Heart left ventricle (tissue), 16 donors: ENCODE measurements at regions of chr5 and their contacts with region 1.

Region 1: GRCh38 chr5:78648359-78649210 is at the start of gene LHFPL2:
- DNase-seq: peak; percentile 78 to 88 (median 83)
- ATAC-seq: peak; percentile 44 to 91 (median 84)
- H3K4me3 ChIP-seq: peak within 1 kb of the TSS; percentile 50 to 97 (median 78)
- H3K27ac ChIP-seq: peak within 1 kb of the TSS; percentile 87 to 94 (median 91)
- H3K4me1 ChIP-seq: peaks cover 0 to 30% (median 14%) of the 10 kb centered on the region in 12 donors
- H3K27me3 ChIP-seq: peaks cover 0 to 4% (median 0%) of the 10 kb centered on the region in 9 donors
- CTCF ChIP-seq: no peak
- POLR2A ChIP-seq: peak in 1 of 2 donors; percentile 15
- total RNA-seq, gene LHFPL2: 5.6 to 35.6 (median 10.1) TPM

Region 2: GRCh38 chr5:78294248-78295034 is 354.1 kb before region 1 on chr5 and contains the start of gene AP3B1:
- intact Hi-C with region 1: loop called in 1 of 10 experiments (anchors 10 kb)
- DNase-seq: peak; percentile 99 to 100 (median 99)
- ATAC-seq: peak; percentile 96 to 98 (median 98)
- H3K4me3 ChIP-seq: peak within 1 kb of the TSS; percentile 60 to 97 (median 88)
- H3K27ac ChIP-seq: peak within 1 kb of the TSS; percentile 64 to 94 (median 90)
- H3K4me1 ChIP-seq: peaks cover 0 to 38% (median 22%) of the 10 kb centered on the region in 12 donors
- H3K27me3 ChIP-seq: no peaks in the 10 kb centered on the region
- CTCF ChIP-seq: no peak
- POLR2A ChIP-seq: peak; percentile 32 to 88
- total RNA-seq, gene AP3B1: 19.3 to 33.7 (median 25.2) TPM

Region 3: DNA sequence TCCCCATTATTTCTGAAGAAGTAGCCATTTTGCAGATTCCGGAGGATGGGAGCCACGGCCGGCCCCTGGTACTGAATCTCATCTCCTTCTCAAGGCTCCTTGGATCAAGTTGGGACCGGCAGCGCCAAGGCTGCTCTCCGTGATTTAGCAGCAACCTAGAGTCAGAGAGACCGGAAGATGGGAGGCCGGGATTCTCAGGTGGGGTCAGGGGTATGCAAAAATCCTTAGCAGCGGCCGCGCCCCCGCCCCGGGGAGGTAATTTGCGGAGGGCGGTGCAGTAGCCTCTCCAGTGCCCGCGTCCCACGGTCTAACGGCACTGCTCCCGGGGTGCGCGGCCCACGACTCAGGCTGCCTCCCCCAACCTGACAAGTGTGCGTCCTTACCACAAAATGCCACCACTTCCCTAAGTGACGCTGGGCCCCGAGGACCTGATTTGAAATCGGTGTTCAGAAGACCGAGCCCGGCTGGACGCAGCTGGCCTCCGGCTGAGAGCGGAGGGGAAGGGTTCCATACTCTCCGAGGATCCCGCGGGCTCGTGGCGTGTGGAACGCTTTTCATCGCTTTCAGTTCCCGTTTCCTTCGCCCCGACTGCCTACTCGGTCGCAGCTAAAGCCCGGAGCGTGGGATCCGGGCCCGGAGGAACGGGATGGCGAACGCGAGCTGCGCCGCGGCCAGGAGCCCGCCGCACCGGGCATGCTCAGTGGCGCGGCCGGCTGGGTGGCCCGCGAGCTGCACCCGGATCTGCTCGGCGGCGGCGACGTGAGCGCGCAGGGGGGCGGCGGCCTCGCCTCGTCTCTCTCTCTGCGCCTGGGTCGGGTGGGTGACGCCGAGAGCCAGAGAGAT is 288.5 kb before region 1 on chr5 and contains the start of gene SCAMP1:
- intact Hi-C with region 1: loop called in 2 of 10 experiments (anchors 10 kb)
- DNase-seq: peak; percentile 92 to 96 (median 93)
- ATAC-seq: peak; percentile 92 to 98 (median 98)
- H3K4me3 ChIP-seq: peak within 1 kb of the TSS; percentile 76 to 97 (median 89)
- H3K27ac ChIP-seq: peak within 1 kb of the TSS; percentile 69 to 95 (median 92)
- H3K4me1 ChIP-seq: peaks cover 0 to 29% (median 24%) of the 10 kb centered on the region in 12 donors
- H3K27me3 ChIP-seq: no peaks in the 10 kb centered on the region
- CTCF ChIP-seq: peak; percentile 14 to 67 (median 51)
- POLR2A ChIP-seq: peak in 1 of 2 donors; percentile 67
- total RNA-seq, gene SCAMP1: 18.9 to 40.6 (median 37.6) TPM

Region 4: DNA sequence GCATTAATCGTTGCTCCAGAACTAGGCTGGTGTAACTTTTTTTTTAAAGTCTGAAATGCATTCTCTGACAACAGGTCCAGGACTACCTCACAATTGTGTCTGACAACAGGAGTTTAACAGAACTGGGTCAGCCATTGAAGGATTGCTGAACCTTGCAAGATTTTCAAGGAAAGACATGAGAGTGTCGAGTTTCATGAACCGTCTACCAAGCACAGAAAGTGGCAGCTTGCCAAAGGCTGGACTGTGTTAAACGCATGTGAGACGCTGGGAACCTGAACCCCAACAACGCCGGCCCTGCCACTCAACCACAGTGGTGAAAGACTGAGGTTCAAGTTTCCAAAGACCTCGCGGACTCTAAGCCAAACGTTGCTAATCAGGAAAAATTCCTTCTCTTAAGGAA is 79.1 kb before region 1 on chr5:
- intact Hi-C with region 1: no loop called
- DNase-seq: peak in 2 of 5 donors; percentile 46 to 51
- ATAC-seq: no peak
- H3K4me3 ChIP-seq: no peak overlapping the region
- H3K27ac ChIP-seq: no peak overlapping the region
- H3K4me1 ChIP-seq: peaks cover 0 to 54% (median 32%) of the 10 kb centered on the region in 12 donors
- H3K27me3 ChIP-seq: no peaks in the 10 kb centered on the region
- CTCF ChIP-seq: no peak
- POLR2A ChIP-seq: no peak

Region 5: DNA sequence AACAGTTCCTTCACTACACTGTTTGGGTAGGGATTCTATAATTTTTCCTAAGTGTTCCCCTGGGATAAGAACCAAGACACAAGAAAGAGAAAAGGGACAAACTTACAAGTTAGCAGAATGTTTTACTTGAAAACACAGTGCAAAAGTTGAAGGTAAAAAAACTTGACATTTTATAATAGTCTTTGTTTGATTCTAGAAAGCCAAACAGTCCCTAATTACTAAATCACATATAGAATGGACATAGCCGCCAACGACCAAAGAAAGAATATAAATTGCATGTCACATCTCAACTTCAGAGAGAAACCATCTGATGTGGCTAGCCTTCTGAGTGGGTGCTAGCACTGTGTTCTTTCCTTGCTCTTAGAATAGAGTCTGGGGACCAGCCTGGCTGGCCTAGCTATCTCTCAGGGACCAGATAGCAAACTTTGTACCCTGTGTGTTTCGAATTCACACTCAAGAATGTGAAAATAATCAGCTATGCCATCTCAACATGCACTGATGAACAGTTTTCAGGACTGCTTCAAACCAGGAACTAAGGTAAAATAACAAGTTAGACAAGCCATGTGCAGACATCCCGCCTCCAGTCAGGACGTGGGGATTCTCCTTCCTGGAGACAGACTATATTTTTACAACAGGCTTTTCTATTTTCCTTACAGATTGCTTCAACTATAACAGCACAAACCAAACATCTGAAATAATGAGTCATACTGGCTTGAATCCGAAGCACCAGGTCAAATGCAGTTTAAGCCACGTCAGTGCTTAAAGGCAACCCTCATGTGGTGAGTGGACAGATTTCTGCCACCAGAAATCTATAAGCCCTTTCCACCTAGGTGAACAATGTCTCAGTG is 53.8 kb before region 1 on chr5:
- intact Hi-C with region 1: loop called in 1 of 10 experiments (anchors 5 kb)
- DNase-seq: peak in 2 of 5 donors; percentile 35 to 51
- ATAC-seq: peak; percentile 63 to 86 (median 80)
- H3K4me3 ChIP-seq: no peak overlapping the region
- H3K27ac ChIP-seq: peak overlapping the region in 10 of 12 donors; percentile 7 to 66 (median 56)
- H3K4me1 ChIP-seq: peaks cover 0 to 69% (median 31%) of the 10 kb centered on the region in 12 donors
- H3K27me3 ChIP-seq: no peaks in the 10 kb centered on the region
- CTCF ChIP-seq: no peak
- POLR2A ChIP-seq: no peak

Region 6: GRCh38 chr5:78899922-78900362 is 251.4 kb after region 1 on chr5:
- intact Hi-C with region 1: loop called in 4 of 10 experiments (anchors 10 kb)
- DNase-seq: no peak
- ATAC-seq: peak in 1 of 4 donors; percentile 36
- H3K4me3 ChIP-seq: no peak overlapping the region
- H3K27ac ChIP-seq: no peak overlapping the region
- H3K4me1 ChIP-seq: peaks cover 0 to 11% (median under 1%) of the 10 kb centered on the region in 12 donors
- H3K27me3 ChIP-seq: no peaks in the 10 kb centered on the region
- CTCF ChIP-seq: peak; percentile 40 to 74 (median 58)
- POLR2A ChIP-seq: no peak